ENCODE measurements at regions of chr12 and their contacts with region 1.

Region 1: DNA sequence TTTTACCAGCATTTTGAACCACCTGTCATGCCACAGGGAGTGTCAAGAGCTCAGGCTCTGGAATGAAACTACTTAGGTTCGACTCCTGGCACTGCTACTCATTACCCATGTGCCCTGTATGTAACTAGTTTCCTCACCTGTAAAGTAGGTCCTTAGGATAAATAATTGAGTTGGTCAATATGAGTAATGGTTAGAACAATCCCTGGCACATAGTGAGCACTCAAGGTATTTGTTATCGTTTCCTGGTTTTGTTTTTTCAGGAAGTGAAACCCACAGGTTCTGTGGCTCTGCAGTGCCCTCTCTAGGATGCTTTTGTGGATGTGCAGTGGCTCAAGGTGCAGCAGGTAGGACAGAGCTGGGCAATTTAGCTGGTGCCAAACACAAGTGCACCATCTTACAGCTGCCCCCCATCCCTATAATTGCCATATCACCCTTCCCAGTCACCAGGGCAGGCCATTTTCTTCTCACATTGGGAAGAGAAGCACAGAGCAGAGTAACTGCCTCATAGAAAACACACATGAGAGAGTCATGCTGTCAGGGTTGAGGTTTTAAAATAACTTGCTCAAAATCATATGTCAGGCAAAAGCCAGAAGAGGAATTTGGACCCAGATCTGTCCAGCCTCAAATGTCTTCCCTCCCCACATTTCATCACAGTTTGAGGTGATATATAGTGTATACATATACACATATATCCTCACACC is 297.5 kb downstream of the RPAP3 start:
- DNase-seq: peak in 5 of 9 donors; percentile 22 to 55 (median 42)
- ATAC-seq: peak; percentile 71
- H3K4me3 ChIP-seq: no peak overlapping the region
- H3K4me3 Mint-ChIP-seq: peak overlapping the region in 7 of 10 donors; percentile 19 to 66 (median 49)
- H3K27ac ChIP-seq: peak overlapping the region; percentile 3
- H3K27ac Mint-ChIP-seq: peak overlapping the region; percentile 22 to 91 (median 83)
- H3K4me1 ChIP-seq: peaks cover 13 to 65% of the 10 kb centered on the region in 2 donors
- H3K4me1 Mint-ChIP-seq: peaks cover 36 to 89% (median 76%) of the 10 kb centered on the region in 7 donors
- H3K27me3 ChIP-seq: no peaks in the 10 kb centered on the region
- H3K27me3 Mint-ChIP-seq: no peaks in the 10 kb centered on the region

Region 2: GRCh38 chr12:47686645-47687240 is 278.4 kb after region 1 on chr12:
- CTCF ChIA-PET with region 1: interaction called, 3 read pairs
- POLR2A ChIA-PET with region 1: no interaction called
- intact Hi-C with region 1: loop called in 1 of 2 experiments (anchors 5 kb)
- DNase-seq: peak in 7 of 9 donors; percentile 21 to 53 (median 43)
- ATAC-seq: peak; percentile 76
- H3K4me3 ChIP-seq: no peak overlapping the region
- H3K4me3 Mint-ChIP-seq: no peak overlapping the region
- H3K27ac ChIP-seq: no peak overlapping the region
- H3K27ac Mint-ChIP-seq: no peak overlapping the region
- H3K4me1 ChIP-seq: peaks cover 0 to 3% of the 10 kb centered on the region in 2 donors
- H3K4me1 Mint-ChIP-seq: peaks cover 9 to 19% (median 14%) of the 10 kb centered on the region in 7 donors
- H3K27me3 ChIP-seq: no peaks in the 10 kb centered on the region
- H3K27me3 Mint-ChIP-seq: no peaks in the 10 kb centered on the region